Panc1 (cell line): ENCODE measurements at regions of chr7 and their contacts with region 1.

Region 1: DNA sequence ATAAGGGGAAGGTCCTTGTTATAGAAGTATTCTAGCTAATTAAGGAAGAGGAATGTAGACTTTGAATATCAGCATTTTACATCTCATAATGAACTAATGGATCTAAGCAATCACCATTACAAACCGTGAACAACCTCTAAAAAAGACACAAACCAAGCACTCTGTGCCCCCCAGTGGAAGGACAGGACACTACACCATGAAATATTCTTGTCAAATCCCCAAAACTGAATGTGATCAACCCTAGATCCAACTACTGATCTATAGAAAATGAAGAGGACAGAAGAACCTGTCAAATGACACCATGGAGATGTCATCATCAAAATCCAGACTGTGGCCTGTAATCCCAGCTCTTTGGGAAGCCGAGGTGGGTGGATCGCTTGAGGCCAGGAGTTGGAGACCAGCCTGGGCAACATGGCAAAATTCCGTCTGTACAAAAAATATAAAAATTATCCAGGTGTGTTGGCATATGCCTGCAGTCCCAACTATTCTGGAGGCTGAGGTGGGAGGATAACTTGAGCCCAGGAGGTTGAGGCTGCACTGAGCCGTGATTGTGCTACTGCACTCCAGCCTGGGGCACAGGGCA is 111.3 kb upstream of the CARD11 start:
- DNase-seq: peak; percentile 27
- ATAC-seq: no peak; the same call in 1 of the 2 replicates
- H3K4me3 ChIP-seq: no peak overlapping the region
- H3K27ac ChIP-seq: no peak overlapping the region
- H3K4me1 ChIP-seq: no peaks in the 10 kb centered on the region
- H3K27me3 ChIP-seq: no peaks in the 10 kb centered on the region
- CTCF ChIP-seq: peak; percentile 84

Region 2: DNA sequence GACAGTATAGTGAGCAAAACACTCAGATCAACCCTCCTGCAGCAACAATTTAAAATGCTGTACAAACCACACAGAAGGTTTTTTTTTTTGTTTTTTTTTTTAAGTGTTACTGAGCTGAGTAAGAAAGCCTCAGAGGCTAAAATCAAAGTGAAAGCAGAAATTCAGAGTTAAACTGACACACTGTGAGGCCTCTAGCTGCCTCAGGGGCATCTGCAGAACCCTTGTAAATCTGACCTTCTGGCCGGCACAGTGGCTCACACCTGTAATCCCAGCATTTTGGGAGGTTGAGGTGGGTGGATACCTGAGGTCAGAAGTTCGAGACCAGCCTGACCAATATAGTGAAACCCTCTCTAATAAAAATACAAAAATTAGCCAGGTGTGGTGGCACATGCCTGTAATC is 303.5 kb before region 1 on chr7:
- CTCF ChIA-PET with region 1: no interaction called
- POLR2A ChIA-PET with region 1: no interaction called
- in situ Hi-C with region 1: no loop called
- intact Hi-C with region 1: no loop called
- DNase-seq: no peak
- ATAC-seq: no peak
- H3K4me3 ChIP-seq: no peak overlapping the region
- H3K27ac ChIP-seq: no peak overlapping the region
- H3K4me1 ChIP-seq: no peaks in the 10 kb centered on the region
- H3K27me3 ChIP-seq: no peaks in the 10 kb centered on the region
- CTCF ChIP-seq: no peak

Region 3: DNA sequence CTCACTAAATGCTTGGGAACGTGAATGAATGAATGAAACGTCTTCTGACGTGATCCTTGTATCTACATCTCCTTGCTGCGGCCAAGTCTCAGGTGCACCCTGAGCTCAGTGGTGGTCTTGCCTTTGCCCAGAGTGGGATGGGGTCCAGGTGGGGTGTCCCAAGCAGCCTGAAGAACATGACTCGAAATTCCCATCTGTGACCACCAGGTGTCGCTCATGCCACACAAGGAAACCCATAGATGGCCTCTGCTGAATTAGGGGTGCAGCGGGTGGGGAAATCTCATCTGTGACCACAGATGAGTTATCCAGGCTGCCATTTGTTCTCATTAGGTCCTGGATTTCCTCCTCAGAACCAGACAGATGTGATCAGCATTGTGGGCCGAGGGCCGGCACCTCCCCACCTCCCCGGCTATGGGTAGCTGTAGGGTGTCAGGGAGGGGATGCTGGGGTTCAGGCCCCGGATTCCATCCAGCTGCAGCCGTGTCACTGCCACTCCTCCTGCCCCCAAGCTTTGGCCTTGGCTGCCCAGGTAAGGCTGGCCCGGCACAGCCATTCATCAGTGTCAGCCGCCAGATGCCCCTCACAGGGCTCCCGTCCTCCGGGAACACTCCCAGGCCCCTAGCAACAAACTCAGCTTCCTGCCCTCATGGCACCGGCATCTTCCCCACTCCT is 289.9 kb before region 1 on chr7:
- CTCF ChIA-PET with region 1: interaction called, 3 read pairs
- POLR2A ChIA-PET with region 1: no interaction called
- in situ Hi-C with region 1: no loop called
- intact Hi-C with region 1: loop called (anchors 5 kb)
- DNase-seq: peak; percentile 65
- ATAC-seq: no peak
- H3K4me3 ChIP-seq: no peak overlapping the region
- H3K27ac ChIP-seq: no peak overlapping the region; the same call in 1 of the 2 replicates
- H3K4me1 ChIP-seq: peaks cover 35% of the 10 kb centered on the region
- H3K27me3 ChIP-seq: no peaks in the 10 kb centered on the region
- CTCF ChIP-seq: peak; percentile 99

Region 4: DNA sequence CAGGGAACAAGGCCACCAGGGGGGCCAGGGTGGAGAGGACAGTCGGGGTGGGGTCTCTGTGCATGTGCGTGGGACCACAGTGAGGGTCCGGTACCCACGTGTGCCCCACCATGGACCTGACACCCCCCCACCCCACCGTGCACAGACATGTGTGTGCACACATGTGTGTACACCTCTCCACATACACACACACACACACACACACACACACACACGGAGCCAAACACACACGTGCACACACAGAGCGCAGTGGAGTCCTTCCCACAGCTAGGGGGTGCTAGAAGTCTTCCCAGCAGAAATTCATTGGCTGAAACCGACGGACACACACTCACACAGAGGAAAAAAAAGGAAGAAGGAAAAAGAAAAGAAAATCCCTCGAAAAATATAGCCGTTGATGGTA is 268.1 kb before region 1 on chr7:
- CTCF ChIA-PET with region 1: no interaction called
- POLR2A ChIA-PET with region 1: no interaction called
- in situ Hi-C with region 1: no loop called
- intact Hi-C with region 1: loop called (anchors 5 kb)
- DNase-seq: peak; percentile 47
- ATAC-seq: peak; percentile 89
- H3K4me3 ChIP-seq: no peak overlapping the region
- H3K27ac ChIP-seq: no peak overlapping the region
- H3K4me1 ChIP-seq: peaks cover 18% of the 10 kb centered on the region
- H3K27me3 ChIP-seq: no peaks in the 10 kb centered on the region
- CTCF ChIP-seq: peak; percentile 99

Region 5: DNA sequence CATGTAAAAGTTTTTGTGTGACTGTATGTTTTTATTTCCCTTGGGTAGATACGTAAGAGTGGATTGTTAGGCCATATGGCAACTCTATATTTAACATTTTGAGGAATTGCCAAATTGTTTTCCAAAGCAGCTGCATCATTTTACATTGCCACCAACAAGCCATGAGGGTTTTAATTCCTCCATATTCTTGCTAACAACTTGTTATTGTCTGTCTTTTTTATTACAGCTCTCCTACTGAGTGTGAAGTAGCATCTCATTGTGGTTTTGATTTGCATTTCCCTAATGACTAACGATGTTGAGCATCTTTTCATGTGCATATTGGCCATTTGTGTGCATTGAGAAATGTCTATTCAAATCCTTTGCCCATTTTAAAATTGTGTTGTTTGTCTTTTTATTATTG is 206.3 kb before region 1 on chr7:
- CTCF ChIA-PET with region 1: no interaction called
- POLR2A ChIA-PET with region 1: interaction called, 11 read pairs
- in situ Hi-C with region 1: no loop called
- intact Hi-C with region 1: no loop called
- DNase-seq: no peak
- ATAC-seq: no peak
- H3K4me3 ChIP-seq: no peak overlapping the region
- H3K27ac ChIP-seq: no peak overlapping the region
- H3K4me1 ChIP-seq: no peaks in the 10 kb centered on the region
- H3K27me3 ChIP-seq: peaks cover 17% of the 10 kb centered on the region
- CTCF ChIP-seq: no peak

Region 6: DNA sequence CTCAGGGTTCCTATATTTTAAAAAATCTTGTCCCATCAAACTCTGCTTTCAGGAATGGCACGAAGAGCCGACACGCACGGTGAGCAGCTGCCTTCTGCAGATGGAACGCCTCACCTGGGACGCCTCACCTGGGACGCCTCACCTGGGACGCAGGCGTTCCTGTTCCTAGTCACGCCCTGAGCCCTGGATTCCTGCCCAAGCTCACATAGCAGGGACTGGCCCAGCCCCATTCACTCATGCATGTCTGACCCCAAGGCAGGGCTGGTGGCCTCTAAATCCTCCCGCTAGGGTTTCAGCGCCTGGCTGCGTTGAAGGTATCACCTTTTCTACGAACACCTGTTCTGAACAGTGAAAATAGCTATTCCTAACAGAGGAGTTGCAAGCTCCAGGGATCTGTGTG is 161.1 kb before region 1 on chr7:
- CTCF ChIA-PET with region 1: no interaction called
- POLR2A ChIA-PET with region 1: interaction called, 10 read pairs
- in situ Hi-C with region 1: no loop called
- intact Hi-C with region 1: no loop called
- DNase-seq: no peak
- ATAC-seq: no peak
- H3K4me3 ChIP-seq: no peak overlapping the region
- H3K27ac ChIP-seq: no peak overlapping the region
- H3K4me1 ChIP-seq: no peaks in the 10 kb centered on the region
- H3K27me3 ChIP-seq: peaks cover 5% of the 10 kb centered on the region; the same call in 1 of the 2 replicates
- CTCF ChIP-seq: no peak